ENCODE measurements at regions of chr11 and their contacts with region 1.

Region 1: GRCh38 chr11:62671575-62672389 is at the starts of genes LBHD1 and UQCC3:
- DNase-seq: peak; percentile 93
- total RNA-seq, gene LBHD1: 1.8 and 3.7 TPM in 2 replicates
- total RNA-seq, gene UQCC3: 23.0 and 28.7 TPM in 2 replicates

Region 2: GRCh38 chr11:62599069-62599696 is 72.6 kb before region 1 on chr11:
- in situ Hi-C with region 1: loop called (anchors 5 kb)
- DNase-seq: peak; percentile 92

Region 3: DNA sequence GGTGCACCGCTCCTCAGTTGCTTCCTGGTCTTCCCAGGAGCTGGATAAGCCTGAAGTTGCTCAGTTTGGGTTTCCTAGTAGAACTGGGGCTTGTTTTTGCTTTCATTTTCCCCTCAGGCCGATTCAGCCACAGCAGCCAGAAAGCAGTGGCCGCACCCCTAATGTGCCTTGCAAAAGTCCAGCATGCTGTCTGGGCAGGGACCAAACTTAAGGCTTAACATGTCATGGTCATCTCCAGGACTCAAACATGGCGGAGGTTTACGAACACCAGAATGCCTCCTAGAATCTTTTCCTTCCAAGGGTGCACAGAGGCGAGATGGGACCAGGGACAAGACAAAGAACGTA is 38.2 kb after region 1 on chr11:
- in situ Hi-C with region 1: loop called (anchors 5 kb)
- DNase-seq: no peak

Region 4: GRCh38 chr11:62875698-62876478 is 204.1 kb after region 1 on chr11:
- in situ Hi-C with region 1: no loop called
- DNase-seq: no peak